Activated T-helper 1 cell treated with anti-CD3 and anti-CD28 coated beads, Interleukin-12 subunit alpha, Interleukin-12 subunit beta, Interleukin-2, Interleukin-4 antibody, amounts not matched to agents 30 ng/mL and 10 ng/mL and 1 ng/mL, durations not matched to agents 14 hours and 24 hours and 36 hours (primary cell): ENCODE measurements at regions of chr1 and their contacts with region 1.

Region 1: GRCh38 chr1:46197964-46198811 is at the start of gene POMGNT1:
- DNase-seq: peak; percentile 78
- H3K4me3 Mint-ChIP-seq: peak within 1 kb of the TSS; percentile 87
- H3K27ac Mint-ChIP-seq: peak within 1 kb of the TSS; percentile 71
- H3K4me1 Mint-ChIP-seq: peaks cover 27% of the 10 kb centered on the region
- H3K27me3 Mint-ChIP-seq: no peaks in the 10 kb centered on the region
- total RNA-seq, gene POMGNT1: 80.8 and 85.7 TPM in 2 replicates

Region 2: GRCh38 chr1:46184920-46185658 is 13.1 kb before region 1 on chr1:
- intact Hi-C with region 1: loop called (anchors 1 kb)
- DNase-seq: no peak
- H3K4me3 Mint-ChIP-seq: peak overlapping the region; percentile 71
- H3K27ac Mint-ChIP-seq: peak overlapping the region; percentile 94
- H3K4me1 Mint-ChIP-seq: peaks cover 22% of the 10 kb centered on the region
- H3K27me3 Mint-ChIP-seq: peaks cover 6% of the 10 kb centered on the region

Region 3: GRCh38 chr1:46223472-46223943 is 25.3 kb after region 1 on chr1:
- intact Hi-C with region 1: loop called (anchors 1 kb)
- DNase-seq: peak; percentile 34
- H3K4me3 Mint-ChIP-seq: no peak overlapping the region
- H3K27ac Mint-ChIP-seq: no peak overlapping the region
- H3K4me1 Mint-ChIP-seq: no peaks in the 10 kb centered on the region
- H3K27me3 Mint-ChIP-seq: peaks cover 3% of the 10 kb centered on the region

Region 4: DNA sequence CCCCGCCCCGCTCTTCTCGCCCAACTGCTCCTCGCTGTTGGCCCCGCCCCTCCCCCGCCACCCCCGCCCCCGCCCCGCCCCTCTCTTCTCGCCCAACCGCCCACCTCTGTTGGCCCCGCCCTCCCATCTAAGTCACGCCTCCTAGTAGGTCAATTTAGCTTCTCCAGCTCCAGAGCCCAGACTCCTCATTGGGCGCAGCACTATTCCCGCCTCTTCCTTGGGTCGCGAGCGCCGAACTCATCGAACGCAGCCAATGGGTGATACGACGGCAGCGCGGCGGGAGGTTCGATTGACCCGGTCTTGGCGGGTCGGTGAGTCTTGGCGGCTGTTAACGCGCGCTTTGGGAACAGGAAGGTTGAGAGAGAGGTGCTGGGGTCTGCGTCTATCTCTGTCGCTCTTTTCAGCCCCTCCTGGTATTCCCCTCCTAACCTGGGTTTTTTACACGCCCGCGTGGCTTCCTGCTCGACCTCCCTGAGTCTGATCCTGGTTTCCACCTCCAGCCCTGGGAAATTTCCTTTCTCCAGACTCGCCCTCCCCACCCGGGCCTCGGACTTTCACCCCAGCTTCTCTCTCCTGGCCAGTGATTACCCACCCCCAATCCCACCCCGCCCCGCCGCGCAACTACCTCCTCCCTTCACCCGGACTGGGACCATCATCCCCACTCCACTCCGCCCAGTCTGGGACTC is 49.4 kb after region 1 on chr1 and contains the start of gene RAD54L:
- intact Hi-C with region 1: loop called (anchors 1 kb)
- DNase-seq: peak; percentile 95
- H3K4me3 Mint-ChIP-seq: peak within 1 kb of the TSS; percentile 97
- H3K27ac Mint-ChIP-seq: peak within 1 kb of the TSS; percentile 94
- H3K4me1 Mint-ChIP-seq: peaks cover 39% of the 10 kb centered on the region
- H3K27me3 Mint-ChIP-seq: no peaks in the 10 kb centered on the region
- total RNA-seq, gene RAD54L: 49.7 and 50.2 TPM in 2 replicates

Region 5: GRCh38 chr1:46303038-46303871 is 105.1 kb after region 1 on chr1 and contains the starts of genes LRRC41 and UQCRH:
- intact Hi-C with region 1: loop called (anchors 1 kb)
- DNase-seq: peak; percentile 92
- H3K4me3 Mint-ChIP-seq: peak within 1 kb of the TSS; percentile 100
- H3K27ac Mint-ChIP-seq: peak within 1 kb of the TSS; percentile 99
- H3K4me1 Mint-ChIP-seq: peaks cover 35% of the 10 kb centered on the region
- H3K27me3 Mint-ChIP-seq: no peaks in the 10 kb centered on the region
- total RNA-seq, gene LRRC41: 62.1 and 62.6 TPM in 2 replicates
- total RNA-seq, gene UQCRH: 258 and 268 TPM in 2 replicates

Region 6: DNA sequence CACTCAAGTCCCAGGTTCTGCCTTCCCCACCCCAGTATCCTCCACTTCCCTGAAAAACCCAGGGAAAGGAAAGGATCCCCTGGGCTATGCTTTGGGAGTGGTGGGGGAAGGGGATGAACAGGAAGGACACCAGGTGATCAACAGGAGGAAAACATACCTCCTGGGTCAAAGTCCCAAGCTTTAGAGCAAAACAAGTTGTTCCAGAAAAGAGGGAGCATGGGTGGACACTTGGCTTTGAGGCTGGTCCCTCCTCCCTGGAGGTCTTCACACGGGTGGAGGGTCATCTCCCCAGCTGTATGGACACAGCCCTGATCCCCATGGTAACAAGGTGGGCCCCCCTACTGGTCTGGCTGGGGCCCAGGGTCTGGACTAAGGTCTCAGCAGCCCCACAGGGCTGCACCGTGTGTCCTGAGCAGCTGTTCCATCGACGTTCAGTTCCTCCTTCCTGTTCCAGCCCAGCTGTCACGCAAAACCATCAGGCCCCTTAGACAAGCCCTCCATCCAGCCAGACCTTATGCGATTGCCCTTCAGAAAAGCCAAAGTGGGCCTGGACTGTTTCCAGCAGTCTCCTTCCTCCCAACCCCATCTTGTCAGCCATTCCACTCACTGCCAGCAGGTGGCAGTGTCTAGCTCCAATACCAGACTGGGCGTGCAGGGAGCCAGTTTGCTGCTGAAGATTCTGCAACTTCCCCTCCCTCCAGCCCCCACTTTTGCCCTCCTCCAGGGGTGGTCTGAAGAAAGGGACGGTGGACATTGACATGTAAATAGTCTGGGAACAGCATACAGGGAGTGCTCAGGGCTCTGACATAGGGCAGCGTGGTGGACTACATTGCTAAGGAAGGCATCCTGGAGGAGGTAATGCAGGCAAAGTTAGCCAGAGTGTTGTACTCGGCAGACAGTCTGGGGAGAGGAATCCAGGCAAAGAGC is 994.5 kb after region 1 on chr1:
- intact Hi-C with region 1: no loop called
- DNase-seq: peak; percentile 54
- H3K4me3 Mint-ChIP-seq: no peak overlapping the region
- H3K27ac Mint-ChIP-seq: no peak overlapping the region
- H3K4me1 Mint-ChIP-seq: no peaks in the 10 kb centered on the region
- H3K27me3 Mint-ChIP-seq: peaks cover 3% of the 10 kb centered on the region